Posterior vena cava (tissue), 2 donors: ENCODE measurements at regions of chr18 and their contacts with region 1.

Region 1: GRCh38 chr18:61710082-61710620 is 182.7 kb downstream of the RNF152 start:
- DNase-seq: no peak

Region 2: DNA sequence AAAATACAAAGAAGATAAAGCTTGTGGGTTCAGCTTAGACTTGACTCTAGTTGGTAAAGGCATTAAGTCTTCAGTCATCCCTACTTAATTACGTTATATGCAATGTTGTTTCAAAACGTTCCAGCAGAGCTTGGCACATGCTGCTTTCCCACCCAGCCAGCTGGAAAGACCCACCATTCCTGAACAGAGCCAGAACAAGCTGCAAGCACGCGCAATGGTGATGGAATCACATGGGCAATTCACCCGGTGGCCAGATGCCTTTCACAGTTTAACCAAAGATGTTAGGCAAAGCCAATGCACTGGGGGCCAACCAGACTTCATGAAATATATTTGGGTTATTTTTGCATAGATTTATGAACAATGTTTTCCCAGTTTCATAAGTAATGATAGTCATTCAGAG is 500.4 kb before region 1 on chr18:
- intact Hi-C with region 1: loop called in 1 of 2 experiments (anchors 5 kb)
- DNase-seq: peak; percentile 79

Region 3: DNA sequence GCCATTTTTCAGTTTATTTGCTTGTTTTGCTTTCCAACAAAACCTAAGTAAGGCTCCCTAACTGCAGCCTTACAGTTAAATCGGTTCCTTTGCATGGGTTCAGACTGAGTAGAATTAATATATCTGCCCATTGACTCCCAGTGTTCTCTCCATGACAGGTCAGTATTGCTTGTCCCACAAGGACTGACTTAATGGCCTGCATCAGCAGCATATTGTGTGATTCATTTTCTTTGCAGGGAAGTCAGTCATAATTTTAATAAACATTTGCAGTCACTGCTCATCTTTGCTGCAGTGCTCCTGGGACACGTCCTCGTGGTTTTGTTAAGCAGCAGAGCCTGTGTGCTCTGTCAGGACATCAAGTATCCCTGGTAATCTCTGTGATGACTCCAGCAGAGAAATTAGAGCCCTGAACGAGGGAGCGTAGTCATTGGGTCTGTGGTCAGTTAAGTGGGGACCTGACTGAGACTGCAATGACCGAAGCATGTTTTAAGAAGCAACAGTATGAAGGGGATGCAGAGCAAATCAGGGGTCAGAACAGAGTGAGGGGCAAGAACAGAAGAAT is 283.6 kb before region 1 on chr18:
- intact Hi-C with region 1: no loop called
- DNase-seq: no peak